ENCODE measurements at regions of chr3 and their contacts with region 1.

Region 1: DNA sequence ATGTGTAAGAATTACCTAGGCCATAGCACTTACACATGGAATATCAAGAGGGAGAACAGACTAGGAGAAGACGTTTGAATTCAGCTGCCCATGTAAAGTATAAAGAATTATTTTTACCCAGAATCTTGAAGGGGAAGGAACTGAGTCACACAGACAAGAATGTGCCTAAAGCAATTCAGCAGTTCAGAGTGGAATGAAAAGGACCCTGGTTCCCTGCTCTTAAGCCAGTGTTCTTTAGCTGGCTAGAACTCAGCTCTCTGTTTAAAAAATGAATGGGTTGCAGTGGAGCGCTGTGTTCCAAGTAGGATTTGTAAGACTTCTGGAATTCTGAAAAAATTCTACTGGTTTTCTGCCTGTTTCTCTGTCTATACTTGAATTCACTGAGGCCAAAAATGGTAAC is 440.2 kb downstream of the LPP start:
- DNase-seq: no peak
- ATAC-seq: peak in 5 of 8 donors; percentile 49 to 88 (median 63)
- H3K4me3 ChIP-seq: no peak overlapping the region
- H3K27ac ChIP-seq: peak overlapping the region in 6 of 10 donors; percentile 10 to 59 (median 32)
- H3K4me1 ChIP-seq: peaks cover 0 to 52% (median 20%) of the 10 kb centered on the region in 9 donors
- H3K27me3 ChIP-seq: no peaks in the 10 kb centered on the region
- CTCF ChIP-seq: no peak

Region 2: GRCh38 chr3:188348435-188349244 is 245.5 kb before region 1 on chr3:
- intact Hi-C with region 1: loop called in 1 of 10 experiments (anchors 5 kb)
- DNase-seq: peak; percentile 69 to 74
- ATAC-seq: peak; percentile 71 to 83 (median 76)
- H3K4me3 ChIP-seq: no peak overlapping the region
- H3K27ac ChIP-seq: peak overlapping the region; percentile 23 to 81 (median 63)
- H3K4me1 ChIP-seq: peaks cover 8 to 70% (median 45%) of the 10 kb centered on the region in 9 donors
- H3K27me3 ChIP-seq: no peaks in the 10 kb centered on the region
- CTCF ChIP-seq: no peak